ENCODE measurements at regions of chr1 and their contacts with region 1.

Region 1: GRCh38 chr1:27616441-27616840 is 12.5 kb upstream of the AHDC1 start:
- DNase-seq: no peak
- H3K4me3 ChIP-seq: no peak overlapping the region
- H3K27ac ChIP-seq: no peak overlapping the region
- H3K4me1 ChIP-seq: peaks cover 28% of the 10 kb centered on the region
- H3K27me3 ChIP-seq: no peaks in the 10 kb centered on the region
- CTCF ChIP-seq: peak in 1 of 2 donors; percentile 24
- POLR2A ChIP-seq: no peak

Region 2: DNA sequence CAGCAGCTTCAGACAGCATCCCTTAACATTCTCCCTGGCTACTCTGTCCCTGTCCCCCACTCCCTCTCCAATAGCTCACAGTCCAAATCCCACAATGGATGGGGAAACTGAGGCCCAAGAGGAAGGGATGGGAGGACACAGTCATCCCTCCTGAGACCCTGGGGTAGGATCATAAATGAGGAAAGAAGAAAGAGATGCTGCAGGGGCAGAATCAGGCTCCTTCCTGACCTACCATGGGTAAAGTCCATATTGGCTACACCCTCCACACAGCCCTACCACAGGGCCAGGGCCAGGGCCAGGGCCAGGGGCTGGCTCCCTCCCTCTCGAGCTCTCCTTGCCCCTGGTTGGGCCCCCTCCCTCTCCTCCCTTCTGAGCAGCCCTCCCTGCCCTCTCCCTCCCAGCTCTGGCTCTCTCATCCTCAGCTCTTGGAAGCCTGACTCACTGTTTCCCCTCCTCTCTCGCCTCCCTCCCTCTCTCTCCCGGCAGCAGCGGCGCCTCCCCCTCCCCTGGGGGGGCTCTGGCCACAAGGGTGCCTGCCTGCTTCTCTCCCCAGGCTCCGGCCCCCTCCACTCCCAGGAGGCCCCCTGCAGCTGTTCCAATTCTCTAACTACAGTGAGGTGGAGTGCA is 17.4 kb before region 1 on chr1:
- CTCF ChIA-PET with region 1: no interaction called
- POLR2A ChIA-PET with region 1: no interaction called
- dilution Hi-C with region 1: no loop called
- intact Hi-C with region 1: no loop called
- DNase-seq: peak; percentile 85
- H3K4me3 ChIP-seq: no peak overlapping the region
- H3K27ac ChIP-seq: no peak overlapping the region
- H3K4me1 ChIP-seq: peaks cover 23% of the 10 kb centered on the region
- H3K27me3 ChIP-seq: no peaks in the 10 kb centered on the region
- CTCF ChIP-seq: no peak
- POLR2A ChIP-seq: no peak

Region 3: GRCh38 chr1:27628712-27629111 is 12.3 kb after region 1 on chr1:
- CTCF ChIA-PET with region 1: interaction called, 19 read pairs
- POLR2A ChIA-PET with region 1: no interaction called
- dilution Hi-C with region 1: no loop called
- intact Hi-C with region 1: no loop called
- DNase-seq: no peak
- H3K4me3 ChIP-seq: no peak overlapping the region
- H3K27ac ChIP-seq: no peak overlapping the region
- H3K4me1 ChIP-seq: peaks cover 15% of the 10 kb centered on the region
- H3K27me3 ChIP-seq: no peaks in the 10 kb centered on the region
- CTCF ChIP-seq: no peak
- POLR2A ChIP-seq: no peak

Region 4: GRCh38 chr1:27752360-27752759 is 135.9 kb after region 1 on chr1:
- CTCF ChIA-PET with region 1: no interaction called
- POLR2A ChIA-PET with region 1: no interaction called
- dilution Hi-C with region 1: no loop called
- intact Hi-C with region 1: no loop called
- DNase-seq: no peak
- H3K4me3 ChIP-seq: no peak overlapping the region
- H3K27ac ChIP-seq: no peak overlapping the region
- H3K4me1 ChIP-seq: no peaks in the 10 kb centered on the region
- H3K27me3 ChIP-seq: no peaks in the 10 kb centered on the region
- CTCF ChIP-seq: no peak
- POLR2A ChIP-seq: no peak